Activated CD4-positive, alpha-beta T cell treated with anti-CD3 and anti-CD28 coated beads, Interleukin-2, amount 10 ng/mL, durations not matched to agents 7 days and 5 days (primary cell): ENCODE measurements at regions of chr14 and their contacts with region 1.

Region 1: GRCh38 chr14:81220830-81221578 is at the start of gene GTF2A1:
- DNase-seq: peak; percentile 94
- H3K4me3 Mint-ChIP-seq: peak within 1 kb of the TSS; percentile 99
- H3K27ac Mint-ChIP-seq: peak within 1 kb of the TSS; percentile 100
- H3K4me1 Mint-ChIP-seq: peaks cover 39% of the 10 kb centered on the region
- H3K27me3 Mint-ChIP-seq: no peaks in the 10 kb centered on the region
- total RNA-seq, gene GTF2A1: 35.3 to 46.9 TPM

Region 2: GRCh38 chr14:81170104-81170828 is 50.7 kb before region 1 on chr14:
- CTCF ChIA-PET with region 1: interaction called, 6 read pairs
- POLR2A ChIA-PET with region 1: interaction called, 12 read pairs
- DNase-seq: peak; percentile 91
- H3K4me3 Mint-ChIP-seq: peak overlapping the region; percentile 86
- H3K27ac Mint-ChIP-seq: peak overlapping the region; percentile 94
- H3K4me1 Mint-ChIP-seq: peaks cover 40% of the 10 kb centered on the region
- H3K27me3 Mint-ChIP-seq: no peaks in the 10 kb centered on the region